ENCODE measurements at regions of chr19 and their contacts with region 1.

Region 1: GRCh38 chr19:33771384-33772101 is 25.1 kb upstream of the KCTD15 start:
- DNase-seq: peak in 2 of 3 donors; percentile 82
- ATAC-seq: peak; percentile 76
- H3K4me3 ChIP-seq: no peak overlapping the region
- H3K4me1 ChIP-seq: no peaks in the 10 kb centered on the region
- CTCF ChIP-seq: peak; percentile 63

Region 2: DNA sequence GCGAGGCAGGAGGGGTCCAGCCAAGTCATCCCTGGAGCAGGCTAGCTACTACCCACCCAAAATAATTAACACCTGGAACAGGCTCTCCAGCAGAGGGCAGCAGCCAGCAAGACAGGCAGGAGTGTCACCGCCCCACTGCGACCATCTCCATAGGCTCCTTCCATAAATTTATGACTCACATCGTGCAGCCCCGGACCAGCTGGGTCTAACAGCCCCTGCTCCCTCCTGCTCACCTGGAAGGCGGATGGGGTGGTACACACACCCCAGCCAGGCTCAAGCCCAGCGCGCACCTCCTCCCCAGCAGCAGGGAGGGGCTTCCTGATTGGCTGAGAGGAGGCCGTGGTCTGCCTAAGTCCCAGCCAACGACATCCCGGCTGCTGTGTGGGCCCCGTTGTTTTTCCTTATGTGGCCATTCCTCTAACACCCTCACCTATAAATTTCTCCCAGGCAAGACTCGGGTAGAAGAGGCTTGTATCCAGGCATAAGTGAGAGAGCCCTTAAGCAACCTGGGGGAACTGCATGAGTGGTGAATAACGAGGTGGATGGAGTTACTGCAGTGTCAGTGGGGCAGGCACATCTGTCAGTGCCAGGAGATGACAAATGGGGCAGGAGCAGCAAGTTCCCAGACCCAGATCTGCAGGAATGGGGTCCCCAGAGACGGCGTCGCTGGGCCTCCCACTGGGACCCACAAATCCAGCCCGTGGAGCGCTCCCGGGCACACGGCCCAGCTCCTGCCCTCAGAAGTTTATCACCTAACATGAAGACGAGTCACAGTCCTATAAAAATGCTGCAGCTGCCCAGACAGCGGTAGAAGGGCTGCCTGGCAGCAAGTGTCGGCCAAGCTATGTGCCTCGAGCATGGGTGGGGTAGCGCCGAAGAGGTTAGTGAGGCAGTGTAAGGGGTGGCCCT is 355.0 kb before region 1 on chr19:
- intact Hi-C with region 1: loop called in 1 of 2 experiments (anchors 5 kb)
- DNase-seq: peak; percentile 54 to 83 (median 77)
- ATAC-seq: peak; percentile 66
- H3K4me3 ChIP-seq: no peak overlapping the region
- H3K4me1 ChIP-seq: no peaks in the 10 kb centered on the region
- CTCF ChIP-seq: peak; percentile 53

Region 3: DNA sequence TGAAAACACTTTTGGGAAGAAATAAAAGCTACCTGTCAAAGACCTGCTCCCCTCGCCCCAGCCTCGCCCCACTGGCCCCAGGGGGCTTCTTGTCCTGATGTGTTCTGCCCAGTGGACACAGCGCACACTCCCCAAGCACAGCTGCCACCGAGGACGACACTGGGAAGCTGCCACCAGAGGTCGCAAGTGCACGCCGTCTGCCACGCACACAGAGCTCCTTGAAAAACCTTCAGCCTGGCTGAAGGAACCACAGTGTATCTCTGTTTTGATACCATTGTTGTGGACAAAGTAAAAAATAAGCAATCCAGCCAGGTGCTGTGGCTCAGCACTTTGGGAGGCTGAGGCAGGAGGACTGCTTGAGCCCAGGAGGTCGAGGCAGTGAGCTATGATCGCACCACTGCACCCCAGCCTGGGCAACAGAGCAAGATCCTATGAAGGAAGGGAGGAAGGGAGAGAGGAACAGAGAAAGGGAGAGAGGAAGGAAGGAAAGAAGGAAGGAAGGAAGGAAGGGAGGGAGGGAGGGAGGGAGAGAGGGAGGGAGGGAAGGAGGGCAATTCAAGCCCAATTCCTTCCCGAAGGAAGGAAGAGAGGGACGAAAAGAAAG is 340.8 kb before region 1 on chr19:
- intact Hi-C with region 1: loop called (anchors 5 kb)
- DNase-seq: peak; percentile 63 to 79 (median 79)
- ATAC-seq: peak; percentile 86
- H3K4me3 ChIP-seq: no peak overlapping the region
- H3K4me1 ChIP-seq: no peaks in the 10 kb centered on the region
- CTCF ChIP-seq: peak; percentile 49

Region 4: GRCh38 chr19:33849551-33850147 is 78.1 kb after region 1 on chr19:
- intact Hi-C with region 1: no loop called
- DNase-seq: no peak
- ATAC-seq: no peak
- H3K4me3 ChIP-seq: no peak overlapping the region
- H3K4me1 ChIP-seq: no peaks in the 10 kb centered on the region
- CTCF ChIP-seq: no peak

Region 5: DNA sequence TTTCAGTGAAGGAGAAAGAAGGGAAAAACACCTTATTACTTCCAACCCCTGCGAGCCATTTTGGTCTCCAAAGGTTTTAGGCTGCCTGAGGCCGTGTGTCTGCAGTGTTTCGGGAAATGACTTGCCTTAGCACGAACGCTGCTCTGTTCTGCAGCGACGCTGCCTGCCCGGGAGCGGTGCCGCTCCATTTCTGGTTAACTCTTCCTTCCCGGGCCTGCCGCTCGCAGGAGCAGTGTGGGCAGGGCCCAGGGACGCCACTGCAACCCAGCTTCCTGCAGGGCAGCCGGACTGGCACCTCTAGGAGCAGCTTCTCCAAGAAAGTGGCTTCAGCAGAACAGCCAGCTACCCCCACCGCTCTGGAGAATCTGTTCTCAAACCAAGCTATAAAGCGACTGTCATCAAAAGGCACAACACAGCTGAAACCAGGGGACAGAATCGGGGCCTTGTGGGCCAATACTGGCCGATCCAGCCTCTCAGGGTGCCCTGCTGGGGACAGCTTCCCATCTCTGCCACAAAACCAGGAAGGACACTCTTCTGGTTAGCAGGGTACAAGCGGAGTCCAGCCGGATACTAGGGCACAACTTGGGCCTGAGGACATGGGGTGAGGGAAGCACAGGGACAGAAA is 97.4 kb after region 1 on chr19:
- intact Hi-C with region 1: no loop called
- DNase-seq: peak in 2 of 3 donors; percentile 30 to 33
- ATAC-seq: peak; percentile 39
- H3K4me3 ChIP-seq: no peak overlapping the region
- H3K4me1 ChIP-seq: peaks cover 3% of the 10 kb centered on the region
- CTCF ChIP-seq: no peak

Measured in mucosa of descending colon (tissue), 3 donors.